BJ (cell line): ENCODE measurements at regions of chr13 and their contacts with region 1.

Region 1: GRCh38 chr13:111049802-111050538 is 65.1 kb upstream of the ARHGEF7 start:
- DNase-seq: no peak
- H3K4me3 ChIP-seq: no peak overlapping the region
- H3K27me3 ChIP-seq: no peaks in the 10 kb centered on the region; the same call in 1 of the 2 replicates
- CTCF ChIP-seq: peak; percentile 62

Region 2: GRCh38 chr13:110915057-110915873 is 134.7 kb before region 1 on chr13 and contains the start of gene ANKRD10:
- CTCF ChIA-PET with region 1: interaction called, 18 read pairs
- POLR2A ChIA-PET with region 1: no interaction called
- DNase-seq: peak; percentile 92
- H3K4me3 ChIP-seq: peak within 1 kb of the TSS; percentile 97
- H3K27me3 ChIP-seq: no peaks in the 10 kb centered on the region
- CTCF ChIP-seq: peak; percentile 77
- polyA plus RNA-seq, gene ANKRD10: 43.5 and 54.4 TPM in 2 replicates

Region 3: DNA sequence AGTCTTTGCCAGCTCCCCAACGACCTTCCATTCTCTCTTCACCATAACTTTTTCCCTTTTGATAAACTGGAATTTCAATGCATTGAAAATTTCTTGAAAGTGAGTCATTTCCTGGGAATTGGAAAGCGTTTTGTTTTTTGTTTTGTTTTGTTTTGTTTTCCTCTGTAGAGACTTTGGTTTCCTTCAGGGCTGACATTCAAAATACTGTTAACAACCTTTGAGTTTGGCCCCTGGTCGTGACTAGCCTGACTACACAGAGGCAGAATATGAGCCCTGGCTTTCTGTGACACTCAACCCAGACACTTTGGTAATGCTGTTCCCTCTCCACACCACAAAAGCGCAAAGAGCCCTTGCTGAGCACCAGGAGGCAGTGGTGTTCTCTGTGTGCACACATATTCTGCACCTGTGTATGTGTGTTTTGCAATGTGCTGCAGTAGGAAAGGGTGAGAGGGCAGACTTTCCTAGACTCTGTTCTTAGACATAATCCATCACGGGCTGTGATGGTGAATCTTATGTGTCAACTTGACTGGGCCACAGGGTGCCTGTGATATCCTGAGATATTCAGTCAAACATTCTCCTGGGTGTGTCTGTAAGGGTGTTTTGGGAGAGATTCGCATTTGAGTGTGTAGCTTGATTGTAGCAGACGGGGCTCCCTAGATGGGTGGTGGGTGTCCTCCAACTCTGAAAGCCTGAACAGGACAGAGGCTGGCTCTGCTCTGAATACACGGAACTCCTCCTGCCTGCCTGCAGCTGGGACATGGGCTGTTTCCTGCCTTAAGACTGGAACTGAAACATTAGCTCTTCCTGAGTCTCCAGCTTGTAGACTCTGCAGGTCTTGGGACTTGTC is 105.6 kb before region 1 on chr13:
- CTCF ChIA-PET with region 1: interaction called, 13 read pairs
- POLR2A ChIA-PET with region 1: no interaction called
- DNase-seq: no peak
- H3K4me3 ChIP-seq: no peak overlapping the region
- H3K27me3 ChIP-seq: no peaks in the 10 kb centered on the region; the same call in 1 of the 2 replicates
- CTCF ChIP-seq: peak; percentile 72

Region 4: GRCh38 chr13:111893071-111893606 is 843.2 kb after region 1 on chr13:
- CTCF ChIA-PET with region 1: no interaction called
- POLR2A ChIA-PET with region 1: no interaction called
- DNase-seq: no peak
- H3K4me3 ChIP-seq: no peak overlapping the region
- H3K27me3 ChIP-seq: no peaks in the 10 kb centered on the region
- CTCF ChIP-seq: no peak